Activated CD4-positive, alpha-beta memory T cell treated with anti-CD3 and anti-CD28 coated beads for 36 hours (primary cell): ENCODE measurements at regions of chr6 and their contacts with region 1.

Region 1: GRCh38 chr6:52253494-52253893 is 9.2 kb upstream of the IL17F start:
- DNase-seq: peak; percentile 73
- H3K4me3 Mint-ChIP-seq: no peak overlapping the region
- H3K27ac Mint-ChIP-seq: no peak overlapping the region
- H3K4me1 Mint-ChIP-seq: peaks cover 41% of the 10 kb centered on the region
- H3K27me3 Mint-ChIP-seq: peaks cover 44% of the 10 kb centered on the region

Region 2: GRCh38 chr6:51855310-51856082 is 398.0 kb before region 1 on chr6:
- CTCF ChIA-PET with region 1: no interaction called
- POLR2A ChIA-PET with region 1: no interaction called
- intact Hi-C with region 1: loop called (anchors 10 kb)
- DNase-seq: no peak
- H3K4me3 Mint-ChIP-seq: no peak overlapping the region
- H3K27ac Mint-ChIP-seq: no peak overlapping the region
- H3K4me1 Mint-ChIP-seq: no peaks in the 10 kb centered on the region
- H3K27me3 Mint-ChIP-seq: peaks cover 12% of the 10 kb centered on the region

Region 3: DNA sequence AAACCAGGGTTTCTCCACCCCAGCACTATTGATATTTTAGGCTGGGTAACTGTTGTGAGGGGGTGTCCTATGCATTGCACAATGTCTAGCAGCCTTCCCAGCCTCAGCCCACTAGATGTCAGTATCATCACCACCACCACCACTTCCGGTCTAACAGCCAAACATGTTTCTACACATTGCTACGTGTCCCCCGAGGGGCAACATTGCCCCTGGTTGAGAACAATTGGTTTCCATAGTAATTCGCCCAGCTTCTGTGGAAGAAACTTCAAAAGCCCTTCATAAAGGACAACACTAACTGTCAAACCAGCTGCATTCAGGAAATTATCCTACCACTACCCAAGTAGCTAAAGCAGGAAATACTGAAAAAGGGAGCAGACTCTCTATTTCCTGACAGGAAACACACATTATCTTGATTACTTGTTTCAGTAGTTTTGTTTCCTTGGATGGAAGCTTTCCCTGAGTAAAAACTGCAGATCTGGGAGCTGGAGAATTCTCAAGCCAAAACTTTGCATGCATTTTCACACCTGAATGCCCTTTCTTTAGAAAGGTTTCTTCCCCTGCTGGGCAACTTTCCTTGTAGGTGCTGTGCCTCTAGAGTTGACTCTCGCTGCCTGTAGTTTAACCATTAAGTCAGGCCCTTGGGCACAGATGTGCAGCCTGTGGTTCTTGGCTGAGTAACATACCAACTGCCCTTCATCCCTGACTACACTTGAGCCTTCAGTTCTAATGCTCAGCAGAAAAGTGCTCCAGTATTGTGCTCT is 189.7 kb before region 1 on chr6:
- CTCF ChIA-PET with region 1: interaction called, 4 read pairs
- POLR2A ChIA-PET with region 1: no interaction called
- intact Hi-C with region 1: loop called (anchors 5 kb)
- DNase-seq: peak; percentile 76
- H3K4me3 Mint-ChIP-seq: no peak overlapping the region
- H3K27ac Mint-ChIP-seq: peak overlapping the region; percentile 38
- H3K4me1 Mint-ChIP-seq: peaks cover 10% of the 10 kb centered on the region
- H3K27me3 Mint-ChIP-seq: no peaks in the 10 kb centered on the region

Region 4: GRCh38 chr6:52210227-52210626 is 43.3 kb before region 1 on chr6:
- CTCF ChIA-PET with region 1: interaction called, 3 read pairs
- POLR2A ChIA-PET with region 1: interaction called, 3 read pairs
- intact Hi-C with region 1: loop called (anchors 5 kb)
- DNase-seq: no peak
- H3K4me3 Mint-ChIP-seq: no peak overlapping the region
- H3K27ac Mint-ChIP-seq: no peak overlapping the region
- H3K4me1 Mint-ChIP-seq: peaks cover 16% of the 10 kb centered on the region
- H3K27me3 Mint-ChIP-seq: peaks cover 27% of the 10 kb centered on the region

Region 5: GRCh38 chr6:52227495-52227894 is 26.0 kb before region 1 on chr6:
- CTCF ChIA-PET with region 1: interaction called, 6 read pairs
- POLR2A ChIA-PET with region 1: interaction called, 4 read pairs
- intact Hi-C with region 1: loop called (anchors 1 kb)
- DNase-seq: peak; percentile 90
- H3K4me3 Mint-ChIP-seq: no peak overlapping the region
- H3K27ac Mint-ChIP-seq: no peak overlapping the region
- H3K4me1 Mint-ChIP-seq: peaks cover 20% of the 10 kb centered on the region
- H3K27me3 Mint-ChIP-seq: peaks cover 39% of the 10 kb centered on the region

Region 6: GRCh38 chr6:52233975-52234823 is 19.3 kb before region 1 on chr6:
- CTCF ChIA-PET with region 1: interaction called, 9 read pairs
- POLR2A ChIA-PET with region 1: interaction called, 4 read pairs
- intact Hi-C with region 1: loop called (anchors 2 kb)
- DNase-seq: peak; percentile 73
- H3K4me3 Mint-ChIP-seq: no peak overlapping the region
- H3K27ac Mint-ChIP-seq: no peak overlapping the region
- H3K4me1 Mint-ChIP-seq: peaks cover 13% of the 10 kb centered on the region
- H3K27me3 Mint-ChIP-seq: peaks cover 39% of the 10 kb centered on the region

Region 7: GRCh38 chr6:52263709-52264540 is 10.4 kb after region 1 on chr6:
- CTCF ChIA-PET with region 1: interaction called, 28 read pairs
- POLR2A ChIA-PET with region 1: no interaction called
- intact Hi-C with region 1: no loop called
- DNase-seq: peak; percentile 82
- H3K4me3 Mint-ChIP-seq: no peak overlapping the region
- H3K27ac Mint-ChIP-seq: peak overlapping the region; percentile 49
- H3K4me1 Mint-ChIP-seq: no peaks in the 10 kb centered on the region
- H3K27me3 Mint-ChIP-seq: no peaks in the 10 kb centered on the region